Stomach (tissue), 19 donors: ENCODE measurements at regions of chr6 and their contacts with region 1.

Region 1: GRCh38 chr6:109389650-109390274 is 7.5 kb upstream of the CD164 start:
- DNase-seq: no peak
- H3K4me3 ChIP-seq: no peak overlapping the region
- H3K27ac ChIP-seq: peak overlapping the region in 4 of 5 donors; percentile 6 to 76 (median 37)
- H3K4me1 ChIP-seq: peaks cover 0 to 40% (median 18%) of the 10 kb centered on the region in 4 donors
- H3K27me3 ChIP-seq: no peaks in the 10 kb centered on the region
- CTCF ChIP-seq: no peak
- EP300 ChIP-seq: no peak
- POLR2A ChIP-seq: no peak

Region 2: GRCh38 chr6:109187399-109188114 is 202.2 kb before region 1 on chr6:
- intact Hi-C with region 1: loop called (anchors 5 kb)
- DNase-seq: peak; percentile 69 to 81
- H3K4me3 ChIP-seq: no peak overlapping the region
- H3K27ac ChIP-seq: no peak overlapping the region
- H3K4me1 ChIP-seq: peaks cover 0 to 31% (median 10%) of the 10 kb centered on the region in 4 donors
- H3K27me3 ChIP-seq: no peaks in the 10 kb centered on the region
- CTCF ChIP-seq: peak in 5 of 7 experiments; percentile 80 to 90 (median 87)
- EP300 ChIP-seq: no peak
- POLR2A ChIP-seq: no peak

Region 3: GRCh38 chr6:109336221-109336961 is 53.4 kb before region 1 on chr6:
- intact Hi-C with region 1: no loop called
- DNase-seq: peak; percentile 74 to 86
- H3K4me3 ChIP-seq: no peak overlapping the region
- H3K27ac ChIP-seq: peak overlapping the region in 4 of 5 donors; percentile 24 to 59 (median 41)
- H3K4me1 ChIP-seq: peaks cover 7 to 18% (median 14%) of the 10 kb centered on the region in 4 donors
- H3K27me3 ChIP-seq: no peaks in the 10 kb centered on the region
- CTCF ChIP-seq: no peak
- EP300 ChIP-seq: no peak
- POLR2A ChIP-seq: no peak